Transverse colon (tissue), 4 donors: ENCODE measurements at regions of chr1 and their contacts with region 1.

Region 1: DNA sequence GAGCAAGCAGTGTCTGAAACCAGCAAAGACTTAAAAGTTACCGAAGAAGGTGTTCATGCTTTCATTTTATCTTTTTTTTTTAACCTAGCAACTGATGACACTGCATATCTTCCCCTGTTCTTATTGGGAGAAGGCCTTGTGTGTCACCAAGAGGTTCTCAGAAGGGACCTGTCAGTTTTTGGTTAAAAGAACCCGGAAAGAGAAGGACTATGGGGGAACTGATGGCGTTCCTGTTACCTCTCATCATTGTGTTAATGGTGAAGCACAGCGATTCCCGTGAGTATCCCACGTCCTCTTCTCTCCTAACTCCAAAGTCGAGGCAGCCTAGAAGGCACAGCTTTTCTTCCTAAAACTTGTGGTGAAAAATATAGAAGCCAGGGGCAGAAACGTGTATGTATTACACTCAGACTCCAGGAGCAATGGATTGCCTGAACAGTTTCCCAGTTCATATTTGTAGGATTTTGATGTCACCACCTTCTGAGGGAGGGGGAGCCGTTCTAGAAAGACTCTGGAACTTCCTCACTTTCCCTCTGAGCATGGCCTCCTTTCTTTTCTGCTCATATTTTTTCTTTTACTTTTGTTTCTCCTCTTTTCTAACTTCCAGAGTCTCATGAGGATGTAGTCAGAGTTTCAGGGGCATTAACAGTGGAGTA is at the start of gene MR1:
- DNase-seq: no peak
- H3K4me3 ChIP-seq: peak within 1 kb of the TSS; percentile 4 to 47 (median 28)
- H3K27ac ChIP-seq: peak within 1 kb of the TSS; percentile 82 to 97 (median 86)
- H3K4me1 ChIP-seq: peaks cover 0 to 34% (median 19%) of the 10 kb centered on the region in 4 donors
- H3K27me3 ChIP-seq: no peaks in the 10 kb centered on the region
- CTCF ChIP-seq: no peak
- EP300 ChIP-seq: no peak
- POLR2A ChIP-seq: peak; percentile 51
- total RNA-seq, gene MR1: 1.00 to 8.6 (median 4.7) TPM

Region 2: DNA sequence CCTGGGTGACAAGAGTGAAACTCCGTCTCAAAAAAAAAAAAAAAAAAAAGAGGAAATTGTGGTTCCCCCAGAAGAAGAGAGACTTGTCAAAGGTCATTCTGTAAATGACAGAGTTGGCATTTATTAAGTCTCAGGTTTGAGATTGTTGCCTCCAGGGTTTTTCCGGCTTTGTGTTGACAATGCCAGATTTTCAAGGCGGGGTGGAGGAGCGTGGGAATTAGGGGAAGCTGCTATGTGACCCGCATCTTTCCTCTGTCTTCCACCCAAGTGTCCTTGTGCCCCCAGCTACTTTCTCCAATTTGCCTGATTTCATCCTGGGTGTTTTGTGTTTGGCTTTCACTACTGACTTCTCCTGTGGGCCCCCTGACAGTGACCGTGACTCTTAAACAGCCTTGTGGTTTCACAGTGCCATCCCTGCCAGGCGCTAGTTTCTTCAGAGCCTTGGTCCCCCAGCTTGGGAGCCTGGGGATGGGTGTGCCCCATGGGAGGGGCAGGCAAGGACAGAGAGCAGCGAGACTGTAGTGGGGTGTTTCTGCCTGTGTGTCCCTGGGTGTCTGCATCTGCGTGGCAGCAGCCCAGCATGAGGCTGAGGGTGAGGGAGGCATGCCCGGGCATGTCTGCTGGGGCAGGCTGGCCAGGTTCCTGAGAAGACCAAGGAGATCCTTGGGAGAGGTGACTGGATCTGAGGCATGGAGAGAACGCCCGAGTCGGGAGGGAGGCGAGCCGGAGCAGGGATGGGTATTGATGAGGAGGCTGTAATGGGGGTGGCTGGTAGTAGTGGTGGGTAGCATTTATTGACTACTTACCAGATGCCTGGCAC is 100.8 kb after region 1 on chr1:
- in situ Hi-C with region 1: loop called in 2 of 4 experiments (anchors 10 to 25 kb)
- intact Hi-C with region 1: no loop called
- DNase-seq: peak; percentile 62
- H3K4me3 ChIP-seq: no peak overlapping the region
- H3K27ac ChIP-seq: peak overlapping the region; percentile 54 to 73 (median 66)
- H3K4me1 ChIP-seq: peaks cover 16 to 30% (median 21%) of the 10 kb centered on the region in 4 donors
- H3K27me3 ChIP-seq: no peaks in the 10 kb centered on the region
- CTCF ChIP-seq: no peak
- EP300 ChIP-seq: no peak
- POLR2A ChIP-seq: no peak

Region 3: DNA sequence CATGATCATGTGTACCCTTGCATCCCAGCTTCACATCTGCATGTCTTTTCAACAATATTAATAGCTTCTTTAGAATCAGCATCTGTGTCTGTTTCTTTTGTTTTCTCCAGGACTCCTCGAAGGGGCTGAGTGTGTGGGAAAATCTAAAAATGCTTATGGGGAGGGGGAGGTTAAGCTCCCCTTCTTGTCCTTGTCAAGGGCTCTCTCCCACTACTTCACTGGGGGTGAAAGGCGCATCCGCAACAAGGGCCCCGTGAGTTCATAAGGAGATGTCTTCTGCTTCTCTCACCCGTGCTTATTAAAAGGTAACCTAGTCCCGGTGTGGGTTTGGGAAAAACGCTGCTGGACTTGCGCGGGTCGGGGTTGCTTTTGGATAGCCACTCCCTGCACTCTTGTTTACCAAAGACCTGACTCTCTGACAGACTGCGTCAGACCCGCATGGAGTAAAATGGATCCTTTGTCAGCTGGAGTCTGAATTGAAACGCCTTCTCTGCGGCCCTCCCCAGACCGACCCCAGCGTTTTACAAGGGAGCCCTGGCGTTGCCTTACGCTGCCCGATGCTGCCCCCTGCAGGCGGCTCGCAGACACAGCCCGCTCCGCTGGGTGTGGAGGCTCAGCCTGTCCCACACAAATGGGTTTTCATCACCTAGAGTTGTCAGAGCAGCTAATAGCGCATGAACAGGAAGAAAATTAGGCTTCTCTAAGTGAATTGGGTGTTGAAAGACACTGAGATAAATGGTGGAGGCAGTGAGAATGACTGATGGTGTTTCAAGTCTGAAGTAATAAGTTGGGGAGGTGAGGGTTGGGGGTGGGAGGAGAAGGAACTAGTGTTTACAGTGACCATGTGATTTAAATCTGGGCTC is 108.4 kb after region 1 on chr1:
- in situ Hi-C with region 1: loop called (anchors 5 to 25 kb)
- intact Hi-C with region 1: loop called (anchors 5 kb)
- DNase-seq: peak; percentile 90
- H3K4me3 ChIP-seq: peak overlapping the region in 2 of 4 donors; percentile 20 to 21
- H3K27ac ChIP-seq: peak overlapping the region in 2 of 4 donors; percentile 34 to 49
- H3K4me1 ChIP-seq: peaks cover 0 to 12% (median 5%) of the 10 kb centered on the region in 4 donors
- H3K27me3 ChIP-seq: no peaks in the 10 kb centered on the region
- CTCF ChIP-seq: peak; percentile 96 to 98 (median 97)
- EP300 ChIP-seq: no peak
- POLR2A ChIP-seq: no peak

Region 4: DNA sequence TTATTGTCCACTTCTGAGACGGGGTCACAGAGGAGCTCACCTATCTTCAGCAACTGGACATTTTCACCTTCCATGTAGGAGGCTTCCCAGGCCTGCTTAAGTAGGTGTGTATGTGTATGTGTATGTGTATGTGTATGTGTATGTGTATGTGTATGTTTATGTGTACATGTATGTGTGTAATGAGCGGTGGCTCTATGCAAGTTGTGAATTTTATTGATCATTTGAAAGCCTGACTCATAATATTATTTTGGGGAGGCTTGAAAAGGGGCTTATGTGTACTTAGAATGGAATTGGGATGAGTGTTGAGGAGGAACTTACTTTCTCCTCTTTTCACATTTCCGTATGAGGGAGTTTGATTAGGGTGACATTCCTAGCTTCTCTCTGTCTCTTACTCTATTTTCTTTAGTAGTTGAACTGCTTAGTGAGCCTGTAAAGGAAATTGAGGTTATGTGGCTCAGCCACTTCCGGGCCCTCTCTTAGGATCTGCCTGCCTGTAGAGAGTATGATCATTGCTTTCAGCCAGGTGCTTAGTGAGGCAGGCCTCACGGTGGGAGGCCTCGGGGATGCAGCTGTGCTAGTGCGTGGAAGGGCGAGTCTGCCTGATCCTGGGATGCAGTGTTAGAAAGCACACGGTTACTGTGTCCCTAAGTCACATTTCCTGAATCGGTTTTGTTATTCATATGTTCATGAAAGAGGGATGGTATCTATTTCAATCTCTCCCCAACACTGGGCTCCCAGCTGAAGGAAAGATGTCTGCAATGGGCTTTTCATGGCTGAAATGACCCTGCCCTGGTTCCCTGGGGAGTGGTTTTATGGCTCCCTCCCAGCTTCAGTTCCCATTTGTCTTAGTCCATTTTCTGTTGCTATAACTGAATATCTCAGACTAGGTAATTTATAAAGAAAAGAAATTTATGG is 115.7 kb after region 1 on chr1:
- in situ Hi-C with region 1: loop called in 3 of 4 experiments (anchors 5 to 25 kb)
- intact Hi-C with region 1: loop called (anchors 5 kb)
- DNase-seq: peak; percentile 67
- H3K4me3 ChIP-seq: no peak overlapping the region
- H3K27ac ChIP-seq: peak overlapping the region in 3 of 4 donors; percentile 1 to 5 (median 3)
- H3K4me1 ChIP-seq: peaks cover 9 to 26% (median 15%) of the 10 kb centered on the region in 4 donors
- H3K27me3 ChIP-seq: no peaks in the 10 kb centered on the region
- CTCF ChIP-seq: no peak
- EP300 ChIP-seq: no peak
- POLR2A ChIP-seq: no peak